Mammary epithelial cell (primary cell): ENCODE measurements at regions of chr3 and their contacts with region 1.

Region 1: GRCh38 chr3:188516515-188516914 is 362.6 kb downstream of the LPP start:
- DNase-seq: no peak
- H3K4me3 ChIP-seq: no peak overlapping the region
- H3K27ac ChIP-seq: no peak overlapping the region
- H3K4me1 ChIP-seq: no peaks in the 10 kb centered on the region
- H3K27me3 ChIP-seq: no peaks in the 10 kb centered on the region
- CTCF ChIP-seq: no peak

Region 2: GRCh38 chr3:188482929-188483328 is 33.6 kb before region 1 on chr3:
- CTCF ChIA-PET with region 1: no interaction called
- dilution Hi-C with region 1: loop called (anchors 5 kb)
- in situ Hi-C with region 1: no loop called
- intact Hi-C with region 1: no loop called
- DNase-seq: no peak
- H3K4me3 ChIP-seq: no peak overlapping the region
- H3K27ac ChIP-seq: no peak overlapping the region
- H3K4me1 ChIP-seq: peaks cover 3% of the 10 kb centered on the region
- H3K27me3 ChIP-seq: no peaks in the 10 kb centered on the region
- CTCF ChIP-seq: no peak